CD8-positive, alpha-beta T cell (primary cell): ENCODE measurements at regions of chr21 and their contacts with region 1.

Region 1: DNA sequence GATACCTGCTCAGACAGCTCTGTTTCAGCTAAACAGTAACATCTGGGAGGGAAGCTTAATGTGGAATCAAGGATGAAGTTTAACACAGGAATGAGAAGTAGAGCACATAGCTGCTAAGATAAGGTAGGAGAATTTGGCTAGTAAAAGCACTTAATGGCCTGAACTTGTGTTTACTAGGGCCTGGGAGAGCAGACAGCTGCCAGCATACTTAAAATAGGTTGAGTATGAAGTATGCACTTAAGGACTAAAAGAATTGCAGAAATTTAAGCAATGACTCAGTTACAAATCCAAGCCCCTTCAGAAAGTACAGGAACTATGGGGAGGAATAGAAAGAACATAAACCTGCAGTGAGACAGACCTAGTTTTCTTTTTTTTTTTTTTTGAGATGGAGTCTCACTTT is 53.0 kb downstream of the BACH1 start:
- DNase-seq: no peak
- ATAC-seq: no peak
- H3K4me3 ChIP-seq: no peak overlapping the region
- H3K4me3 Mint-ChIP-seq: no peak overlapping the region
- H3K27ac ChIP-seq: no peak overlapping the region
- H3K27ac Mint-ChIP-seq: no peak overlapping the region
- H3K4me1 ChIP-seq: peaks cover 8% of the 10 kb centered on the region
- H3K4me1 Mint-ChIP-seq: peaks cover 13% of the 10 kb centered on the region
- H3K27me3 ChIP-seq: no peaks in the 10 kb centered on the region
- H3K27me3 Mint-ChIP-seq: no peaks in the 10 kb centered on the region
- CTCF ChIP-seq: no peak

Region 2: DNA sequence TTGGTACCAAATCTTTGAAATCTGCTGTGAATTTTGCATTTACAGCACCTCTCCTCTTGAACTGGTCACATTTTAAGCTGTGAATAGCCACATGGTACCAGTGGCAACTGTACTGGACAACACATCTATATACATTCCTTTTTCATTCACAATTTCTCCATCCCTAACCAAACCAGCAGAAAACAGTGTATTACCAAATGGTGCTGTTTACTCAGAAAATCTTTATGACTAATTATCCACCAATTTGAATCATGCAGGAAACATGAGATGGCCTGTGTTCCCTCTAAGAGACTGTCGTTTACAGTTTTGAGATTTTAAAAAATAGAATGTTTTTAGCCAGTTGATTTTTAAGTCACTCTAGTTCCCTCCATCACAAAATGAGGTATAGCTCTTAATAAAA is 260.7 kb before region 1 on chr21:
- CTCF ChIA-PET with region 1: interaction called, 29 read pairs
- POLR2A ChIA-PET with region 1: no interaction called
- intact Hi-C with region 1: loop called (anchors 1 kb)
- DNase-seq: no peak
- ATAC-seq: no peak
- H3K4me3 ChIP-seq: no peak overlapping the region
- H3K4me3 Mint-ChIP-seq: no peak overlapping the region
- H3K27ac ChIP-seq: no peak overlapping the region
- H3K27ac Mint-ChIP-seq: no peak overlapping the region
- H3K4me1 ChIP-seq: no peaks in the 10 kb centered on the region
- H3K4me1 Mint-ChIP-seq: no peaks in the 10 kb centered on the region
- H3K27me3 ChIP-seq: no peaks in the 10 kb centered on the region
- H3K27me3 Mint-ChIP-seq: no peaks in the 10 kb centered on the region
- CTCF ChIP-seq: no peak

Region 3: DNA sequence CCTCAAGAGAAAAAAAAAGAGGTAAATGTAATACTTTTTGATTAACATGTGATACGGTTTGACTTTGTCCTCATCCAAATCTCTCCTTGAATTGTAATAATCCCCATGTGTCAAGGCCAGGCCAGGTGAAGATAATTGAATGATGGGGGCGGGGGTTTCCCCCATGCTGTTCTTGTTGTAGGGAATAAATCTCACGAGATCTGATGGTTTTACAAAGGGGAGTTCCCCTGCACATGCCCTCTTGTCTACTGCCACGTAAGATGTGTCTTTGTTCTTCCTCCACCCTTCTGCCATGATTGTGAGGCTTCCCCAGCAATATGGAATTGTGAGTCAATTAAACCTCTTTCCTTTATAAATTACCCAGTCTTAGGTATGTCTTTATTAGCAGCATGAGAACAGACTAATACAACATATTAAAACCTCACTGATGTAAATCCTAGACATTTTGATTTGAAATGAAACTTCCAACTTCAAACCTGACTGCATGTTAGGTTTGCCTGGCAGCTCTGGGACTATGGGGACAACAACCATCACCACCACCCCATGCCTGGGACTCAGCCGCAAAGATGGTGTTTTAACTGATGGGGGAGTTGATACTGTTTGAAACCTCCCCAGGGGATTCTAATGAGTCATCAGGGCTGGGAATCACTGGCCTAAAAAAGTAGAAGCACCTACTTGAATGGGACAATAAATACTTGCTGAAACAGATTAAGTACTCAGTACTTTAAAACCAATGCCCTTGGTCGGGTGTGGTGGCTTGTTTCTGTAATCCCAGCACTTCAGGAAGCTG is 85.8 kb before region 1 on chr21:
- CTCF ChIA-PET with region 1: interaction called, 3 read pairs
- POLR2A ChIA-PET with region 1: no interaction called
- intact Hi-C with region 1: loop called (anchors 1 to 2 kb)
- DNase-seq: peak in 2 of 9 experiments; percentile 3 to 16
- ATAC-seq: no peak
- H3K4me3 ChIP-seq: no peak overlapping the region
- H3K4me3 Mint-ChIP-seq: no peak overlapping the region
- H3K27ac ChIP-seq: no peak overlapping the region
- H3K27ac Mint-ChIP-seq: no peak overlapping the region
- H3K4me1 ChIP-seq: no peaks in the 10 kb centered on the region
- H3K4me1 Mint-ChIP-seq: no peaks in the 10 kb centered on the region
- H3K27me3 ChIP-seq: no peaks in the 10 kb centered on the region
- H3K27me3 Mint-ChIP-seq: no peaks in the 10 kb centered on the region
- CTCF ChIP-seq: no peak